ENCODE measurements at regions of chr7 and their contacts with region 1.

Region 1: GRCh38 chr7:121020652-121021051 is 32.1 kb downstream of the CPED1 start:
- DNase-seq: no peak
- ATAC-seq: peak in 1 of 4 donors; percentile 20
- H3K4me3 ChIP-seq: no peak overlapping the region
- H3K27ac ChIP-seq: peak overlapping the region in 11 of 12 donors; percentile 32 to 81 (median 66)
- H3K4me1 ChIP-seq: peaks cover 3 to 87% (median 66%) of the 10 kb centered on the region in 12 donors
- H3K27me3 ChIP-seq: no peaks in the 10 kb centered on the region
- CTCF ChIP-seq: no peak
- POLR2A ChIP-seq: no peak

Region 2: GRCh38 chr7:120973849-120974248 is 46.8 kb before region 1 on chr7:
- intact Hi-C with region 1: no loop called
- DNase-seq: no peak
- ATAC-seq: no peak
- H3K4me3 ChIP-seq: no peak overlapping the region
- H3K27ac ChIP-seq: no peak overlapping the region
- H3K4me1 ChIP-seq: no peaks in the 10 kb centered on the region
- H3K27me3 ChIP-seq: no peaks in the 10 kb centered on the region
- CTCF ChIP-seq: no peak
- POLR2A ChIP-seq: no peak

Region 3: GRCh38 chr7:121081327-121081936 is 60.8 kb after region 1 on chr7:
- intact Hi-C with region 1: loop called in 1 of 10 experiments (anchors 5 kb)
- DNase-seq: no peak
- ATAC-seq: peak in 3 of 4 donors; percentile 36 to 62 (median 62)
- H3K4me3 ChIP-seq: no peak overlapping the region
- H3K27ac ChIP-seq: peak overlapping the region in 8 of 12 donors; percentile 13 to 83 (median 46)
- H3K4me1 ChIP-seq: peaks cover 0 to 53% (median 29%) of the 10 kb centered on the region in 12 donors
- H3K27me3 ChIP-seq: no peaks in the 10 kb centered on the region
- CTCF ChIP-seq: peak; percentile 64 to 81 (median 76)
- POLR2A ChIP-seq: no peak

Region 4: DNA sequence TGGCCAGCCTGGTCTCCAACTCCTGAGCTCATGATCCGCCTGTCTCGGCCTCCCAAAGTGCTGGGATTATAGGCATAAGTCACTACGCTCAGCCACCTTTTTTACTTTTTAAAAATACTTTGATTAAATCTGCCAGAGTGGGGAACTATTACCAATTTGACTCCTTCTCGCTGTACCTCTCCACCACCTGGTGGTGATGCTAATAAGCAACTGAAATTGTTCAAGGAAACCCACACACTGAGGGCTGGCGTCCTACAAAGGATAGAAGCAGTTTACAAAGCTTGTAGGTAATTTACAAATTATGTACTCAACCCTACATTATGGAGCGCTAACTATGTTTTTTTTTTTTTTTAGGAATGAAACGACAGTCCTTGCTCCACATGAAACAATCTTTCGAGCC is 78.9 kb after region 1 on chr7:
- intact Hi-C with region 1: no loop called
- DNase-seq: no peak
- ATAC-seq: no peak
- H3K4me3 ChIP-seq: no peak overlapping the region
- H3K27ac ChIP-seq: no peak overlapping the region
- H3K4me1 ChIP-seq: peaks cover 0 to 31% (median 15%) of the 10 kb centered on the region in 12 donors
- H3K27me3 ChIP-seq: no peaks in the 10 kb centered on the region
- CTCF ChIP-seq: no peak
- POLR2A ChIP-seq: no peak

Measured in heart left ventricle (tissue), 16 donors.